Activated CD8-positive, alpha-beta T cell treated with anti-CD3 and anti-CD28 coated beads for 36 hours (primary cell): ENCODE measurements at regions of chr5 and their contacts with region 1.

Region 1: GRCh38 chr5:73792687-73793320 is 166.8 kb downstream of the ARHGEF28 start:
- DNase-seq: peak; percentile 82
- ATAC-seq: peak; percentile 79
- H3K4me3 Mint-ChIP-seq: no peak overlapping the region
- H3K27ac Mint-ChIP-seq: no peak overlapping the region
- H3K4me1 Mint-ChIP-seq: peaks cover 3% of the 10 kb centered on the region
- H3K27me3 Mint-ChIP-seq: peaks cover 20% of the 10 kb centered on the region
- CTCF ChIP-seq: peak; percentile 90

Region 2: DNA sequence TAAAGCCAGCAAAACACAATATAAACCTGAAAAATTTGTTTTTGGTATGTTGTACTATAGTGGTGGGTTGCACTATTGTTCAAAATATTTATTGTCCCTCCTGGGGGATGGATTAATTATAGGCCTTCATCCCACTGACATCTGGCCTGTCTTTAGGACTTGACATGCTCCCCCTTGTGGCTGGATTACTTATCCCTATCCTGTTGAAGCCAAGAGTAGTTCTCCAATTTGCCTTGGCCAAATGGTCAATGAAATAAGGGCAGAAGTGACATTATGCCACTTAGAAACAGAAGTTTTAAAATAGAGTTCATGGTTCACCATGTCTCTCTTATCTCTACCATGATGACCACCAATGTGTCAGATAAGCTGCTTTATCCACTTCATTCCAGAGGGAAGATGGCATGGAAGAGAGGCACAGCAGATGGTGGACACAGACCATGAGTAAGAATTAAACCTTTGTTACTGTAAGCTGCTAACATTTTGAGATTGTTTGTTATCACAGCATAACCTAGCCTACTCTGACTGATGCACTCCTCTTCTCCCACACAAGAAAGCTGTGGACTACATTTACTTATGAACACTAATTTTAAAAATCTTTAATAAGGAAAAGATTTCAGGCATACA is 196.0 kb before region 1 on chr5:
- CTCF ChIA-PET with region 1: interaction called, 228 read pairs
- POLR2A ChIA-PET with region 1: interaction called, 3 read pairs
- intact Hi-C with region 1: no loop called
- DNase-seq: peak; percentile 29
- ATAC-seq: no peak
- H3K4me3 Mint-ChIP-seq: no peak overlapping the region
- H3K27ac Mint-ChIP-seq: no peak overlapping the region
- H3K4me1 Mint-ChIP-seq: no peaks in the 10 kb centered on the region
- H3K27me3 Mint-ChIP-seq: no peaks in the 10 kb centered on the region
- CTCF ChIP-seq: peak; percentile 62

Region 3: GRCh38 chr5:74056789-74057164 is 264.0 kb after region 1 on chr5:
- CTCF ChIA-PET with region 1: no interaction called
- POLR2A ChIA-PET with region 1: no interaction called
- intact Hi-C with region 1: no loop called
- DNase-seq: no peak
- ATAC-seq: no peak
- H3K4me3 Mint-ChIP-seq: no peak overlapping the region
- H3K27ac Mint-ChIP-seq: no peak overlapping the region
- H3K4me1 Mint-ChIP-seq: no peaks in the 10 kb centered on the region
- H3K27me3 Mint-ChIP-seq: no peaks in the 10 kb centered on the region
- CTCF ChIP-seq: no peak